Sigmoid colon (tissue), 7 donors: ENCODE measurements at regions of chr3 and their contacts with region 1.

Region 1: GRCh38 chr3:115783938-115784738 is 160.8 kb downstream of the GAP43 start:
- DNase-seq: peak; percentile 94
- H3K4me3 ChIP-seq: peak overlapping the region; percentile 42 to 77 (median 74)
- H3K27ac ChIP-seq: peak overlapping the region; percentile 83 to 94 (median 86)
- H3K4me1 ChIP-seq: peaks cover 0 to 17% (median 7%) of the 10 kb centered on the region in 4 donors
- H3K27me3 ChIP-seq: no peaks in the 10 kb centered on the region
- CTCF ChIP-seq: peak; percentile 81 to 96 (median 88)
- EP300 ChIP-seq: no peak
- POLR2A ChIP-seq: no peak

Region 2: GRCh38 chr3:115814778-115815380 is 30.7 kb after region 1 on chr3:
- intact Hi-C with region 1: loop called (anchors 2 kb)
- DNase-seq: peak; percentile 83
- H3K4me3 ChIP-seq: no peak overlapping the region
- H3K27ac ChIP-seq: no peak overlapping the region
- H3K4me1 ChIP-seq: no peaks in the 10 kb centered on the region
- H3K27me3 ChIP-seq: no peaks in the 10 kb centered on the region
- CTCF ChIP-seq: peak; percentile 70 to 93 (median 78)
- EP300 ChIP-seq: no peak
- POLR2A ChIP-seq: no peak

Region 3: GRCh38 chr3:115903843-115904242 is 119.7 kb after region 1 on chr3:
- intact Hi-C with region 1: no loop called
- DNase-seq: no peak
- H3K4me3 ChIP-seq: no peak overlapping the region
- H3K27ac ChIP-seq: no peak overlapping the region
- H3K4me1 ChIP-seq: peaks cover 0 to 12% (median 8%) of the 10 kb centered on the region in 4 donors
- H3K27me3 ChIP-seq: no peaks in the 10 kb centered on the region
- CTCF ChIP-seq: no peak
- EP300 ChIP-seq: no peak
- POLR2A ChIP-seq: no peak